ENCODE measurements at regions of chr2 and their contacts with region 1.

Region 1: GRCh38 chr2:61006486-61007105 is 10.9 kb upstream of the PEX13 start:
- ATAC-seq: no peak
- H3K4me3 ChIP-seq: no peak overlapping the region
- H3K27ac ChIP-seq: no peak overlapping the region
- H3K4me1 ChIP-seq: no peaks in the 10 kb centered on the region

Region 2: DNA sequence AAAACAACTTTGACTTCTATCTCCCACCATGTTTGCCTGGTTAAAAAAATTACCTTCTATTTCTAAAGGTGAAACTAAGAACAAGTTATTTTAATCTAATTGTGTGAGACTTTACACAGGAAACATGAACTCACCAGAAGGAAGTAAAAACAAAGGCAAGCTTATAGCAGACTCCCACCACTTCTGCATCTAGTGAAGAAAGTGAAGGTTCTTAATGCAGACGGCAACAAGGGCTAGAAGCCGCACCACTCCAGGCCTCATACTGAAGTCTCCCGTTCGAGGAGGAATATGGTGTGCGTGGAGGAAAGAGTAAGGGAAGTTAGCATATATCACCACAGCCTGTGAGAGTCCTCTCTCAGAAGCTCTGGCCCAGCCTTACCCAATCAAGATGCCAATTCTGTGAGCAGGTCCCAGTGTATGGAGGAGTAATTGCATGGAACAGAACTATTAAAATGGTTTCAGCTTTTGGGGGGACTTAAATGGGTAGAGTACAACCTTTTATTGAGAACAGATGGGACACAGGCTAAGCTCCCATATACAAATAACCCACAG is 1411.8 kb before region 1 on chr2:
- in situ Hi-C with region 1: no loop called
- ATAC-seq: no peak
- H3K4me3 ChIP-seq: no peak overlapping the region
- H3K27ac ChIP-seq: no peak overlapping the region
- H3K4me1 ChIP-seq: peaks cover 0 to 3% of the 10 kb centered on the region in 2 donors

Region 3: GRCh38 chr2:60818272-60818671 is 188.3 kb before region 1 on chr2:
- in situ Hi-C with region 1: loop called in 1 of 9 experiments (anchors 10 kb)
- ATAC-seq: peak in 3 of 8 experiments; percentile 29 to 47 (median 34)
- H3K4me3 ChIP-seq: no peak overlapping the region
- H3K27ac ChIP-seq: no peak overlapping the region
- H3K4me1 ChIP-seq: no peaks in the 10 kb centered on the region

Measured in motor neuron (in vitro differentiated cells).